Uterus (tissue), 4 donors: ENCODE measurements at regions of chr5 and their contacts with region 1.

Region 1: GRCh38 chr5:139633295-139634027 is 14.7 kb upstream of the CXXC5 start:
- DNase-seq: peak; percentile 69 to 72
- H3K4me3 ChIP-seq: no peak overlapping the region
- H3K27ac ChIP-seq: no peak overlapping the region
- H3K4me1 ChIP-seq: peaks cover 0 to 12% of the 10 kb centered on the region in 2 donors
- H3K27me3 ChIP-seq: no peaks in the 10 kb centered on the region
- CTCF ChIP-seq: peak; percentile 97 to 99 (median 98)
- POLR2A ChIP-seq: no peak

Region 2: DNA sequence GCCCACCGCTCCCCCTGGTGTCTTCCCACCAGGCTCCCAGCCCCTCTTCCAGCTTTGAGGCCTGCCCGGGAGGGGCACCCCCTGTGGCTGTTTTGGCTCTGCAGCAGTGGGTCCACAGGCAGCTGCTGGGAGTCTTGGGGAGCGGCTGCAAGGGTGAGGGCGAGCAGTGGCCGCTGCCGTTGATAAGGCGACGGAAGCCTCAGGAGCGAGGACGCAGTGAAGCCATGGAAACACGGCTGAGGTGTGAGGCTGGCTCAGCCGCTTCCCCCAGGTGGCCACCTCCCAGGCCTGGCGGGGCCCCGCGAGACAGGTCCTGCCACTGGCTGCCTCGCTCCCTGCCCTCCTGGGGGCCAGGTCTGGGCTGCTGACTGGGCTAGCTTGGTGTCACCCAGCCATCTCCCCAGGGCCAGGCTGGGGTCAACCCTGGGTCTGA is 56.2 kb after region 1 on chr5:
- intact Hi-C with region 1: loop called (anchors 2 kb)
- DNase-seq: no peak
- H3K4me3 ChIP-seq: no peak overlapping the region
- H3K27ac ChIP-seq: peak overlapping the region in 1 of 2 donors; percentile 73
- H3K4me1 ChIP-seq: peaks cover 0 to 21% of the 10 kb centered on the region in 2 donors
- H3K27me3 ChIP-seq: no peaks in the 10 kb centered on the region
- CTCF ChIP-seq: no peak
- POLR2A ChIP-seq: no peak

Region 3: DNA sequence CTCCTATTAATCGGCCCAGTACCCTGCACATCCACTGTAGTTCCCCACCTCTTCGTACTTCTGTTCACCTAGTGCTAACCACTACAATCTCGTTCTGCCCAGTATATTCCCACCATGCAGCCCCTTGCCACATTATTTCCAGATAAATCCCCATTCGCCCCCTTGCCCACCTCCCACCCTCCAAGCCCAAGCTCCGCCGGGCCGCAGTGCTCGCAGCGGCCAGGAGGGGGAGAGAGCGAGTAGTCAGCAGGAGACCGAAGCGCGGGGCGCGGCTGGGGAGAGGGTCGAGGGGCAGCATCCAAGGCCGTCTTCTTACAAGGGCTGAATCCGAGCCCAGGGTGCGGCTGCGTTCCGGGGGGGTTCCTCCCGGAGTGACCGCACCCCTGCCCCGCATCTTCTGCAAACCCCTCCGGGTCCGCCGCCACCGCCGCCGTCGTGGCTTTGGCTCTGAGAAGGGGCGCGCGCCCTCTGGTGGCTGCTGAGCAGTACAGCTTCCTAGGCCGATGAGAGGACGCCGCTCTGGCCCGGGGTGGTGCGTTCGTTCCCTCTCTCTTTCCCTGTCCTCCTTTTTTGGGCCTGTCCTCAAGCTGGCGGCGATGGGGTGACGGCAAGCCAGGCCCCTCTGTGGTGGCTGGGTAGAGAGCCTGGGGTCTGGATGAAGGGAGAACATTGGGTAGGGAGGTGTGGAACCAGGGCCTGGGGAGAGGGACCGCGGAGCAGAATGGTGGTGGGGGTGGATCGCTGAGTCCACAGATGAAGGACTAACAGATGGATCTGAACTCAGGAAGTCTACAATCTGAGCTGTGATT is 132.2 kb after region 1 on chr5:
- intact Hi-C with region 1: loop called (anchors 2 kb)
- DNase-seq: peak; percentile 62 to 80
- H3K4me3 ChIP-seq: peak overlapping the region; percentile 45 to 46
- H3K27ac ChIP-seq: no peak overlapping the region
- H3K4me1 ChIP-seq: peaks cover 0 to 5% of the 10 kb centered on the region in 2 donors
- H3K27me3 ChIP-seq: no peaks in the 10 kb centered on the region
- CTCF ChIP-seq: peak; percentile 93 to 99 (median 98)
- POLR2A ChIP-seq: peak in 1 of 2 donors; percentile 37